PC-9 (cell line): ENCODE measurements at regions of chr6 and their contacts with region 1.

Region 1: DNA sequence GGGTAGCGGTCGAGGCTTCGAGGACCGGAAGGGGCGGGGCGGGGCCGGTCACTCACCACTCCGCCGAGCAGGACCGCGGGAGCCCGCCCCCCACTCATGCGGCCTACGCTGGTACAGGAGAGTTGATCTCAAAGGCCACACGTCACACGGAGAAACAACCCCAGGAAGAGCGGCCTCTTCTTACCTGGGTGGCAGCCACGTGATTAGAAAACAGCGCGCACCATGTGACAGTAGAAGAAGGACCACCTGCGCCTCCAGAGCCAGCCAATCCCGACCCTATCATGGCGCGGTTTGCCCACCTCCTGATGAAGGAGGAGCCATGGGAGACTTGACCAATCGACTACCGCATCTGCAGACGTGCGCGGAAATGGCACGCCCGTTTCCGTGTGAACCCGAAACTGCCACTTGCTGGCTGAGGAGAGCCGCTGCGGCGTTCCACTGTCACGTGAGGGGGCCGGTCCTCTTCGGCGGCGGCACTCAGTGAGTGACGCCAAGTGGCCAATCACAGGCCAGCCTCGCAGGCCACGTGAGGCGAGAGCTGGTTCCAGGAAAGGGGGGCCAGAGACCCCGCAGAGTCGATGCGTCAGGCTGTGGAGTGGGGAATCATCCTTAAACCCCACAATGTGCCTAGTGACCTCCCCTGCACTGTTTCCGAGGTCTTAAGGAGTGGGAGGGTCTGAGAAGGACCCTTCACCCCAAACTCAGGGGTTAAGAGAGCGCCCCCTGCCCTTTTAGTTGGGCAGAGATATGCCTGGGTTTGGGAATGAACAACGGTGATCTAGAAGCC is at the start of gene CUTA:
- DNase-seq: peak; percentile 98 to 99
- H3K4me3 ChIP-seq: peak within 1 kb of the TSS; percentile 84
- H3K27ac ChIP-seq: peak within 1 kb of the TSS; percentile 74
- H3K4me1 ChIP-seq: peaks cover 15% of the 10 kb centered on the region
- H3K27me3 ChIP-seq: peaks cover 21% of the 10 kb centered on the region
- CTCF ChIP-seq: peak; percentile 48
- total RNA-seq, gene CUTA: 213 and 220 TPM in 2 replicates

Region 2: GRCh38 chr6:33323623-33323948 is 94.5 kb before region 1 on chr6:
- CTCF ChIA-PET with region 1: no interaction called
- POLR2A ChIA-PET with region 1: no interaction called
- intact Hi-C with region 1: loop called (anchors 1 kb)
- DNase-seq: no peak
- H3K4me3 ChIP-seq: peak overlapping the region; percentile 63
- H3K27ac ChIP-seq: peak overlapping the region; percentile 41
- H3K4me1 ChIP-seq: peaks cover 43% of the 10 kb centered on the region
- H3K27me3 ChIP-seq: no peaks in the 10 kb centered on the region
- CTCF ChIP-seq: no peak